ENCODE measurements at regions of chr6 and their contacts with region 1.

Region 1: DNA sequence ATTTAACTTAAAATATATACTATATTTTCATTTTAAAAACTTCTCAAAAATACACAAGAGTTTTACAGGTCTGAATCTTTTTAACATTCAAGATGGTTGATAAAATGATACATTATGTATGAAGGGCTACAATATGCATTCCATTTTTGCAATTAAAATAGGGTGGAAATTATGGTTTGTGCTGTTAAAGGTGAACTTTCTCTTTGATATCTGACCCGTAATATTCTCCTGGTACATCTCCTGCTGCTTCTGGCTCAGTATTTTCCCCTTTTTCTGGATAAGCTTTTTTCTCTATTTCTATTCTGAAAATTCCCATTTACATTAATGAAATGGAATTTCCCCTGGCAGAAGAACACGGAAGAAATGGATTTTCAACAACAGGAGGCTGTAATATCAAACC is 27.4 kb upstream of the LCA5 start:
- DNase-seq: no peak
- ATAC-seq: no peak

Region 2: DNA sequence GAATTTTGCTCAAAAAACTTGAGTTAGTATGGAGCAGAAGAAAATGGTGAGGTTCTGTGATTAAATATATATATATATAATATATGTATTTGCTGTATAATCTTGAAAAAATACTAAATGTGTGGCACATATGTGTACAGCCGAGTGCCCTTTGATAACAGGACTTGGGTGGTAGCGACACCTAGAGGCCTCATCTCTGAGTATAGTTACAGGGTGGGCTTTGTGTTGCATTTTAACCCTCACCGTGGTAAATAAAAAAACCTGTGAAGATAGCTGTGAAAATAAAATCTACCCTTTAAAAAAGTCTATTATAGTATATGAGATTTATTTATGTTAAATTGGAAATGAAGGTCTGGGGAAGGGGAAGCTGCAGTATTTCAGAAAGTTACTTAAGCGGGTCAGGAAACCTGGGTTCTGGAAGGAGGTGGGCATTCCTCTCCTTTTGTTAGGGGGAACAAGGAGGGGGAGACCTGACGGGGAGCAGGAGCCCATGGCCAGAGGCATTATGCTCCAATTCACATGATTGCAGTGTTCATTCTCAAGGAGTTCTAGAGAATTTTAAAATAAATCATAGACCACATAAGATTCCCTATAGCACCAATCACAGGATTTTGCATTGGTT is 149.2 kb after region 1 on chr6:
- intact Hi-C with region 1: loop called in 1 of 2 experiments (anchors 10 kb)
- DNase-seq: peak in 1 of 2 donors; percentile 71
- ATAC-seq: peak; percentile 66